ENCODE measurements at regions of chr17 and their contacts with region 1.

Region 1: GRCh38 chr17:45135192-45135977 is at the start of gene ACBD4:
- DNase-seq: peak; percentile 98
- ATAC-seq: peak; percentile 89
- H3K4me3 Mint-ChIP-seq: peak within 1 kb of the TSS; percentile 88
- H3K27ac Mint-ChIP-seq: peak within 1 kb of the TSS; percentile 86
- H3K4me1 Mint-ChIP-seq: peaks cover 12% of the 10 kb centered on the region
- H3K27me3 Mint-ChIP-seq: no peaks in the 10 kb centered on the region
- CTCF ChIP-seq: peak; percentile 100
- total RNA-seq, gene ACBD4: 12.4 to 12.6 TPM

Region 2: GRCh38 chr17:45013021-45013997 is 122.1 kb before region 1 on chr17:
- CTCF ChIA-PET with region 1: no interaction called
- POLR2A ChIA-PET with region 1: no interaction called
- intact Hi-C with region 1: no loop called
- DNase-seq: no peak
- ATAC-seq: no peak
- H3K4me3 Mint-ChIP-seq: no peak overlapping the region
- H3K27ac Mint-ChIP-seq: no peak overlapping the region
- H3K4me1 Mint-ChIP-seq: peaks cover 4% of the 10 kb centered on the region
- H3K27me3 Mint-ChIP-seq: peaks cover 9% of the 10 kb centered on the region
- CTCF ChIP-seq: no peak

Region 3: GRCh38 chr17:45051060-45051719 is 84.2 kb before region 1 on chr17 and contains the start of gene DCAKD:
- CTCF ChIA-PET with region 1: interaction called, 17 read pairs
- POLR2A ChIA-PET with region 1: no interaction called
- intact Hi-C with region 1: no loop called
- DNase-seq: peak; percentile 94
- ATAC-seq: peak; percentile 97
- H3K4me3 Mint-ChIP-seq: peak within 1 kb of the TSS; percentile 84
- H3K27ac Mint-ChIP-seq: peak within 1 kb of the TSS; percentile 96
- H3K4me1 Mint-ChIP-seq: peaks cover 44% of the 10 kb centered on the region
- H3K27me3 Mint-ChIP-seq: no peaks in the 10 kb centered on the region
- CTCF ChIP-seq: no peak
- total RNA-seq, gene DCAKD: 34.3 to 35.8 TPM

Region 4: DNA sequence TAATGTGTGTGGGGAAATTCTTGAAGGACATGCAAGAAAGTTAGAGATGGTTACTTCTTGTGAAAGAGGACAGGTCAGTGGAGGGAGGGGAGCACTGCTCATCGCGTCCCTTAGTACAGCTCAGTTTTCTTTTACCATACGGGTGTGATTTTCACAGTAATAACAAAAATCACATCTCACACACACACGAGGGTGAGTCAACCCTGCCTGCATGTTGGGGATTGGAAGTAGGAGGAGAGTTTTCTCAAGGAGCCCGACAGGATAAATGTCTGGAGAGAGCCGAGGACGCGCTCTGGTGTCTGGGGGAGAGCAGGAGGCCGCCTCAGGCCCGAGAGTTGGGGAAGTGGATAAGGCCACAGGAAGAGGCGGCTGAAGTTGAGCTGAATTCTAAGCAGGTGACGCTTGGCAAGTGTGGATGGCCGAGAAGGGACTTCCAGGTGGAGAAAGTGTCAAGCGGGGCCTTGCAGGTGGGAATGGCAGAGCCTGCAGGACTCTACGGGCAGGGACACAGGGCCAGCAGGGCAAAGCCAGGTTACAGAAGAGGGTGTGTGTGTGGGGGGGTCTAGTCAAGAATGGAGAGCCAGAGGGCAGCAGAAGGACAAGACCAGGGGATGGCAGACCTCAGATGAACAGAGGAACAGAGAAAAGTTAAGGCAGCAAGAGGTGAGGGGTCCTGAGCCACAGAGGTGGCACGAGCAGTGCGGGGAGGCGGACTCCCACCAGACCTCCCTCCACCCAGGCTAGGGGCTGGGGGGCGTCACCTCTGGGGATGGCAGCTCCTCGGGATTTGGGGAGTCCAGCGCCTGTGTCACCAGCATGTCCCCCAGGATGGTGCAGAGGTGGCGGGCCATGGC is 19.3 kb before region 1 on chr17:
- CTCF ChIA-PET with region 1: interaction called, 24 read pairs
- POLR2A ChIA-PET with region 1: no interaction called
- intact Hi-C with region 1: no loop called
- DNase-seq: no peak
- ATAC-seq: no peak
- H3K4me3 Mint-ChIP-seq: no peak overlapping the region
- H3K27ac Mint-ChIP-seq: no peak overlapping the region
- H3K4me1 Mint-ChIP-seq: no peaks in the 10 kb centered on the region
- H3K27me3 Mint-ChIP-seq: no peaks in the 10 kb centered on the region
- CTCF ChIP-seq: no peak

Region 5: GRCh38 chr17:45184144-45184543 is 48.8 kb after region 1 on chr17:
- CTCF ChIA-PET with region 1: interaction called, 36 read pairs
- POLR2A ChIA-PET with region 1: no interaction called
- intact Hi-C with region 1: no loop called
- DNase-seq: no peak
- ATAC-seq: no peak
- H3K4me3 Mint-ChIP-seq: no peak overlapping the region
- H3K27ac Mint-ChIP-seq: no peak overlapping the region
- H3K4me1 Mint-ChIP-seq: no peaks in the 10 kb centered on the region
- H3K27me3 Mint-ChIP-seq: no peaks in the 10 kb centered on the region
- CTCF ChIP-seq: no peak

Region 6: DNA sequence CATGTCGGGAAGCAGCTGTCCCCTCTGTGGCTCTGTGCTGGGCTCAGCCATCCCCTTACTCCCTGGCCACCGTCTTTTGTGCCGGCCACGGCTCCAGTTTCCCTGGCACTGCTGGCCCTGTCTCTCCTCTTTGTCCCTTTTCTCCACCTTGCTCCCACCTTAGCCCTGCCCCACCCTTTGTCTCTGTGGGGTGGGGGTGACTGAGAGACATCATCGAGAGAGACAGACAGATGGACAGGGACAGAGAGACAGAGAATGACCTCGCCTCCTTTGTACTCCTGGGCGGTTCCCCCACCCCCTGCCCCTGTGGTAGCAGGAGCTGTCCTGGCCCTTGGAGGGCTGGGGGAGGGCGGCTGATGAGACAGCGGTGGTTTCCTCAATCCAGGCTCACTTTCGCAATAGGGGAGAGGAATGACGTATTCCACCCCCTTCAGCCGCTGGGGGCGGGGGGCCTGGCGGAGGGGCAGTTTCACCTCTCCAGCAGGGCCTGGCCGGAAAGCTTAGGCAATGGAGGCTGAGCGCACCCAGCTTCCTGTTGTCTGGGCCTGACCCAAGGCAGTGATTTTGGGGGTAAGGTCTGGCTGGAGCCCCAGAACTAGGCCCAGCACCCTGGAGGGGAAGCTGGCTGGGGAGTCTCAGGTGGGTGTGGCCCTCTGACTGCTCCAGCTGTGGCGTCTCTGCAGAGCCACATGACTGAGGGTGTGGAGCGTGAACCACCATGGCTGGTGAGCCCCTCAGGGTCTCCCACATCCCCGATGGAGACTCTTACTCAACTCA is 93.6 kb after region 1 on chr17:
- CTCF ChIA-PET with region 1: interaction called, 52 read pairs
- POLR2A ChIA-PET with region 1: interaction called, 4 read pairs
- intact Hi-C with region 1: no loop called
- DNase-seq: peak; percentile 96
- ATAC-seq: peak; percentile 41
- H3K4me3 Mint-ChIP-seq: peak overlapping the region; percentile 99
- H3K27ac Mint-ChIP-seq: peak overlapping the region; percentile 99
- H3K4me1 Mint-ChIP-seq: peaks cover 70% of the 10 kb centered on the region
- H3K27me3 Mint-ChIP-seq: no peaks in the 10 kb centered on the region
- CTCF ChIP-seq: no peak

Region 7: DNA sequence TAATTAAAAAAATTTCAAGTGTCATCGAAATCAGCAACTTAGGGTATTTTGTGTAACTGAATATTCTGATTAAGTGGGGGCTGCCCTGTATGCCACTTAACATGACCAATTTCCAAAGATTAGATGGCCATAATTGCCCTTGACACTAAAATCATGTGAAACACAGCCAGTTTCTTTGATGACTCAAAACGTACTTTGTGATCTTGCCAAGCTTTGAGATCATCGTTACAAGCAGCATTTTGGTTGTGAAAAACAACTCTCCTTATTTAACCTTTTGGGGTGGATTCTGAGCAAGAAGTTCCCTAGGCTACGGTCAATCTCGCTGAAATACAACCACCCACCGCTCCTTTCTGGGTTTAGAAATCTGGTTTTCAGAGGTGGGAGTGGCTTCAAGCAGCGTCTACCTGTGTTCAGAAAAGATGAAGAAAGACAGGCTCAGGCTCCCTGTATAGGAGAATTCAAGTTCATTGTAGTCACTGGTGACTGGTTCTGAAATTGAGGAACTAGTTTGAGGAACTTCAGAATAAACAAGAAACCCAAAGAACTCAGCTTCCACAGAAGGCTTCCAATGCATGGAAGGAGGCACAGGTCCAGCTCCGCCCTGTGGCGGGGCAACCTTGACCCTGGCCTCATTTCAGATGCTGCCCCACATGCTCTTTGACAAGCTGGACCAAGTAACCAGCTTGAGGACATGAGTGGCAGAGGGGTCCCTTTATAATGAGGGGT is 172.1 kb after region 1 on chr17:
- CTCF ChIA-PET with region 1: interaction called, 12 read pairs
- POLR2A ChIA-PET with region 1: no interaction called
- intact Hi-C with region 1: no loop called
- DNase-seq: peak; percentile 81
- ATAC-seq: peak; percentile 58
- H3K4me3 Mint-ChIP-seq: peak overlapping the region; percentile 36
- H3K27ac Mint-ChIP-seq: peak overlapping the region; percentile 95
- H3K4me1 Mint-ChIP-seq: peaks cover 83% of the 10 kb centered on the region
- H3K27me3 Mint-ChIP-seq: no peaks in the 10 kb centered on the region
- CTCF ChIP-seq: no peak